AG04450 (cell line): ENCODE measurements at regions of chr3 and their contacts with region 1.

Region 1: GRCh38 chr3:38260474-38260873 is 5.1 kb upstream of the SLC22A13 start:
- DNase-seq: no peak
- H3K4me3 ChIP-seq: no peak overlapping the region
- H3K27ac ChIP-seq: no peak overlapping the region
- H3K27me3 ChIP-seq: no peaks in the 10 kb centered on the region
- CTCF ChIP-seq: no peak

Region 2: DNA sequence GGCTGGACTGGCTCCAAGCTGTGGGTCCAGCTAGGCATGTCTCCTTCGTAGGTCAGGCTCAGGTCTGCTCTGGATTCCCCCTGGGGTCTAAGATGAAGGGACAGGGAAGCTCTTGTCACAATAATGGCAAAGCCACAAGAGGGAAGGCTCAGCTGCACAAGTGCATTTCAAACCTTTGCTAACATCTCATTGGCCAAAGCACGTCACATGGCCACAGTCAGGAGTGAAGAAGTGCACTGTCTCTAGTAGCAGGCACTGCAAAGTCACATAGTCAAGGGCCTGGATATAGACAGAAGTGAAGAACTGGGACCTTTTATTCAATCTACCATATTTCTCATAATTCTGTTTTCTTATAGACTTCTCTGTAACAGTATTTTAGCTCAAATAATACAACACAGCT is 201.3 kb before region 1 on chr3:
- CTCF ChIA-PET with region 1: no interaction called
- POLR2A ChIA-PET with region 1: no interaction called
- DNase-seq: no peak
- H3K4me3 ChIP-seq: no peak overlapping the region
- H3K27ac ChIP-seq: no peak overlapping the region
- H3K27me3 ChIP-seq: peaks cover 2% of the 10 kb centered on the region
- CTCF ChIP-seq: no peak

Region 3: GRCh38 chr3:38235466-38235865 is 25.0 kb before region 1 on chr3:
- CTCF ChIA-PET with region 1: interaction called, 14 read pairs
- POLR2A ChIA-PET with region 1: no interaction called
- DNase-seq: no peak
- H3K4me3 ChIP-seq: no peak overlapping the region
- H3K27ac ChIP-seq: no peak overlapping the region
- H3K27me3 ChIP-seq: no peaks in the 10 kb centered on the region
- CTCF ChIP-seq: no peak